ENCODE measurements at regions of chr6 and their contacts with region 1.

Region 1: GRCh38 chr6:100001915-100002388 is 7.9 kb upstream of the MCHR2 start:
- DNase-seq: peak in 1 of 2 donors; percentile 38
- ATAC-seq: peak; percentile 85
- H3K4me3 ChIP-seq: no peak overlapping the region
- H3K27ac ChIP-seq: no peak overlapping the region
- H3K4me1 ChIP-seq: no peaks in the 10 kb centered on the region
- H3K27me3 ChIP-seq: no peaks in the 10 kb centered on the region
- CTCF ChIP-seq: peak; percentile 78 to 95 (median 86)
- POLR2A ChIP-seq: no peak

Region 2: DNA sequence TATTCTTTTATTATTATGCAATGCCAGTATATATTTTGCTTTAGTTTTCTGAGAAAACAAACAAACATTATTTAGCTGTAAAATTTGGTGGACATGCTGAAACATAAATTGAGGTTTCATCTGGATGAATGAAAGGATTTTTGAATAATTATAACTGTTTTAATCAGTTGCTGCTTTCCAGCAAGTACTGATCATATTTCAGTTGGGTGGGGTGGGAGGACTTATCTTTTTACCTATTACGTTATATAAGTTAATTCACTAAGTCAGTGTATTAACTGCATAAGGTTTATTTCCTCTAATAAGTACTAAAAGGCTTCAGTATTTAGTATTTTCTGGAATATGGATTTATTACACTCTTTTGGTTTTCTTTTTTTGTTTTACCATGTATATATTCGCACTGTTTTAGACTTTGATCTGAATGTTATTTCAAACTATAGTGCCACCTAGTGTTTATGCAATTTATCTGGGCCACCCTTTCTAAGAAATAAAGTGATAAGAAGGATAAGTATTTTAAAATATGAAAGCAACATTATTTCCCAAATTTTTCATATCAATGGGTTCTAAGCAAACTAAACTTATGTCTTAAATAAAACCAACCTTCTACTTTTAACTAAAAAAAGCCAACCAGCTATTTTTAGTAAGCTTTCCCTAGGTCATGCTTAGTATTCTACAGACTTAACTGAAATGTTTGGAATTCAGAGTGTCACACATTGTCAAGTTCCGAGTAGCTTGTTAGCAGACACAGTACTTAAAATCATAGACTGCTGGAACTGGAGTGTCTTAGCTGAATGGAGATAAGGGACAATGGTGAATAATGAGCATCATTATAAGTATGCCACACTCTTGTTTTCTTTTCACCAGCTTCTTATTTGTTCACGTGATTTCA is 97.5 kb after region 1 on chr6:
- in situ Hi-C with region 1: loop called (anchors 5 kb)
- intact Hi-C with region 1: loop called (anchors 1 kb)
- DNase-seq: no peak
- ATAC-seq: peak; percentile 66 to 75
- H3K4me3 ChIP-seq: no peak overlapping the region
- H3K27ac ChIP-seq: no peak overlapping the region
- H3K4me1 ChIP-seq: no peaks in the 10 kb centered on the region
- H3K27me3 ChIP-seq: no peaks in the 10 kb centered on the region
- CTCF ChIP-seq: peak; percentile 50 to 70 (median 55)
- POLR2A ChIP-seq: no peak

Region 3: GRCh38 chr6:100479179-100480035 is 477.5 kb after region 1 on chr6:
- in situ Hi-C with region 1: loop called in 1 of 4 experiments (anchors 10 kb)
- intact Hi-C with region 1: no loop called
- DNase-seq: no peak
- ATAC-seq: no peak
- H3K4me3 ChIP-seq: no peak overlapping the region
- H3K27ac ChIP-seq: no peak overlapping the region
- H3K4me1 ChIP-seq: no peaks in the 10 kb centered on the region
- H3K27me3 ChIP-seq: peaks cover 0 to 3% (median 0%) of the 10 kb centered on the region in 3 donors
- CTCF ChIP-seq: peak; percentile 30 to 65 (median 60)
- POLR2A ChIP-seq: no peak

Region 4: DNA sequence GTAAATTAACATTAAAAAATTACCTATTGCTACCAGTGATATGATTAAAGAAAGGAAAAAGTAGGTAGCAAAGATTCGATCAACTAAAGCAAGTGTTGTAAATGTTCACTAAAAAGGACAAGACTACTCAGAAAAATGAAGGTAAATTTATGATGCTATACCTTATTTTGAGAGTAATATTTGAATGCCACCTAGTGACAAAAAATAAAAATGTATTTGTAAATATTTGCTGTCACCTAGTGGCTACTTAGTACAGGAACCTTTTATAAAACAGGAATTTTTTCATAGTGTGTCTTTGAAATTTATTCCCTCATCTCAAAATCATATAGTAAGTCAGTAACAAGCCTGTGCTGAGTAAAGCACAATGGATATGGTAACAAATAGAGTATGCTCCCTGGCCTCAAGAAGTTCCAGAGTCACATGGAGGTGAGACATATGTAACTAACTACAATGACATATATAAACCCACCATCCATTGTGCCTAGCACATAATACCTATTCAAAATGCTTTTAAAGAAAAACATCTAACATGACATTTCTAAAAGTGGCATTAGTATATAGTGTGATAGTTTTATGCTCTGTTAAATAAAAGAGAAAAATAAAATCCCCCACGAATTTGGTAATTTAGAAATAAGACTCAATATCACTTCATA is 655.9 kb after region 1 on chr6:
- in situ Hi-C with region 1: loop called in 2 of 4 experiments (anchors 10 to 25 kb)
- intact Hi-C with region 1: no loop called
- DNase-seq: no peak
- ATAC-seq: no peak
- H3K4me3 ChIP-seq: no peak overlapping the region
- H3K27ac ChIP-seq: no peak overlapping the region
- H3K4me1 ChIP-seq: no peaks in the 10 kb centered on the region
- H3K27me3 ChIP-seq: no peaks in the 10 kb centered on the region
- CTCF ChIP-seq: peak in 1 of 5 experiments; percentile 45
- POLR2A ChIP-seq: no peak

Region 5: DNA sequence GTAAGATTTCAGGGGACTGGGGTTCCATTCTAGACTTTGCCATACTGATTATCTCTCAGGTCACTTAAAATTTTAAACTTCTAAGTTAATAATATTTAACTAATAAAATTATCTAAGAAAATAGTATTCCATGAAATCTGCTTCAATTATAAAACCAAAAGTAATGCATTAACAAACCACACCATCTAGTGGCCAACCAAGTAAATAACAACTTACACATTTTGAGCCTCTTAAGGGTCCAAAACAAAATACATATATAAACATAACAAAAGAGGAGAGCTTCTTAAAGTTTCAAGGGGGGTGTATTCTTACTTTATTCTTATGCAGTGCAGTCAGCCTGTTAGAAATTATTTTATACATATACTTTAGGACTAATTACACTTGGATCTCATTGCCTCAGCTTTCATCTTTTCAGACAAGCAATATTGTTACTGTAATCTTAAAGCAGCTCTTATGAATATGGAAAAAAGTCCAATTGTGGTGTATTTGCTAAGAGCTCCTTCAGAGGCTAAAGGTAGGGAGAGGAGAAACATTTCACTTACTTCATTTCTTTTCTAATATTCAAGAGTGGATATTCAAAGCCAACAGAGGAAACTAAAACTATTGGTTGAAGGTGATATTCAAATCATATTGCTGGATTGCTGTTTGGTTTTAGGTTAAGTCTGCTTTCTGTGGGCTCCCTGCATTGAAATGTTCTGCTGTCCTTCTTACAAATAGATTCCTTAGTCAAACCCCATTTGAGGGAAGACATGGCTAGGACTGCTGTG is 662.5 kb after region 1 on chr6:
- in situ Hi-C with region 1: loop called in 2 of 4 experiments (anchors 10 to 25 kb)
- intact Hi-C with region 1: no loop called
- DNase-seq: no peak
- ATAC-seq: no peak
- H3K4me3 ChIP-seq: no peak overlapping the region
- H3K27ac ChIP-seq: no peak overlapping the region
- H3K4me1 ChIP-seq: no peaks in the 10 kb centered on the region
- H3K27me3 ChIP-seq: no peaks in the 10 kb centered on the region
- CTCF ChIP-seq: peak in 4 of 5 experiments; percentile 35 to 66 (median 50)
- POLR2A ChIP-seq: no peak